CD4-positive, alpha-beta memory T cell (primary cell): ENCODE measurements at regions of chr5 and their contacts with region 1.

Region 1: GRCh38 chr5:33969572-33970452 is 14.7 kb downstream of the SLC45A2 start:
- DNase-seq: peak in 4 of 5 donors; percentile 8 to 20 (median 12)
- H3K4me3 ChIP-seq: no peak overlapping the region
- H3K4me3 Mint-ChIP-seq: no peak overlapping the region
- H3K27ac ChIP-seq: no peak overlapping the region
- H3K27ac Mint-ChIP-seq: peak overlapping the region in 1 of 7 donors; percentile 35
- H3K4me1 ChIP-seq: no peaks in the 10 kb centered on the region
- H3K4me1 Mint-ChIP-seq: peaks cover 2 to 12% (median 7%) of the 10 kb centered on the region in 4 donors
- H3K27me3 ChIP-seq: no peaks in the 10 kb centered on the region
- H3K27me3 Mint-ChIP-seq: no peaks in the 10 kb centered on the region

Region 2: GRCh38 chr5:33433303-33434240 is 536.2 kb before region 1 on chr5:
- CTCF ChIA-PET with region 1: interaction called, 28 read pairs
- POLR2A ChIA-PET with region 1: no interaction called
- intact Hi-C with region 1: loop called (anchors 1 kb)
- DNase-seq: no peak
- H3K4me3 ChIP-seq: no peak overlapping the region
- H3K4me3 Mint-ChIP-seq: no peak overlapping the region
- H3K27ac ChIP-seq: no peak overlapping the region
- H3K27ac Mint-ChIP-seq: no peak overlapping the region
- H3K4me1 ChIP-seq: peaks cover 7% of the 10 kb centered on the region
- H3K4me1 Mint-ChIP-seq: peaks cover 7 to 11% (median 9%) of the 10 kb centered on the region in 4 donors
- H3K27me3 ChIP-seq: no peaks in the 10 kb centered on the region
- H3K27me3 Mint-ChIP-seq: peaks cover 2% of the 10 kb centered on the region in 2 donors

Region 3: DNA sequence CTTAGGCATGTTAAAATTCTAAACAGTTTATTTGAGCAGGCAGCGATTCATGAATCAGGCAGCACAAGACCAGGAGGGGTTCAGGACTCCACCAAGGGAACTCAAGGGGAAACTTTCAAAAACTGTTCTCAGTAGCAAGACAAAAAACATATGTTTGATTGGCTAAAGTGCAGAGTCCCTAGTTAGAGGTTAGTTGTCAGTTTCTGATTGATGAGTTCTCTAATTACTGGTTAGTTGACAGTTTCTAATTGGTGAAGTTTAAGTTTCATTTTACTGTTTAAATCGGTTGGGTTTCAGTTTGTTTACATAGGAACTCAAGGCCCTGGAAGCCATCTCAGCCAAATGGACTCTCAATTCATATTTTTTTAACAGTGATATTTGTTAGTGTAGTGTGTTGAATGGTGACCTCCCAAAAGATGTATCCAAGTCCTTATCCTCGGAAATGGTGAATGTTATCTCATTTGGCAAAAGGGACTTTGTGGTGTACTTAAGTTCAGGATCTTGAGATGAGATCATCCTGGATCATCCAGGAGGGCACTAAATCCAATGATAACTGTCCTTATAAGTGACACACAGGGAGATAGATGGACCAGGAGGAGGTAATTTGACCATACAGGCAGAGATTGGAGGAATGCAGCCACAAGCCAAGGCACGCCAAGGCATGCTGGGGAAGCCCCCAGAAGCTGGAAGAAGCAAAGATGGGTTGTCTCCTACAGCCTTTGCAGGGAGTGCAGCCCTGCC is 467.1 kb after region 1 on chr5:
- CTCF ChIA-PET with region 1: no interaction called
- POLR2A ChIA-PET with region 1: no interaction called
- intact Hi-C with region 1: no loop called
- DNase-seq: no peak
- H3K4me3 ChIP-seq: no peak overlapping the region
- H3K4me3 Mint-ChIP-seq: no peak overlapping the region
- H3K27ac ChIP-seq: no peak overlapping the region
- H3K27ac Mint-ChIP-seq: no peak overlapping the region
- H3K4me1 ChIP-seq: no peaks in the 10 kb centered on the region
- H3K4me1 Mint-ChIP-seq: no peaks in the 10 kb centered on the region
- H3K27me3 ChIP-seq: no peaks in the 10 kb centered on the region
- H3K27me3 Mint-ChIP-seq: peaks cover 4 to 9% of the 10 kb centered on the region in 2 donors